K562 (cell line): ENCODE measurements at regions of chr15 and their contacts with region 1.

Region 1: DNA sequence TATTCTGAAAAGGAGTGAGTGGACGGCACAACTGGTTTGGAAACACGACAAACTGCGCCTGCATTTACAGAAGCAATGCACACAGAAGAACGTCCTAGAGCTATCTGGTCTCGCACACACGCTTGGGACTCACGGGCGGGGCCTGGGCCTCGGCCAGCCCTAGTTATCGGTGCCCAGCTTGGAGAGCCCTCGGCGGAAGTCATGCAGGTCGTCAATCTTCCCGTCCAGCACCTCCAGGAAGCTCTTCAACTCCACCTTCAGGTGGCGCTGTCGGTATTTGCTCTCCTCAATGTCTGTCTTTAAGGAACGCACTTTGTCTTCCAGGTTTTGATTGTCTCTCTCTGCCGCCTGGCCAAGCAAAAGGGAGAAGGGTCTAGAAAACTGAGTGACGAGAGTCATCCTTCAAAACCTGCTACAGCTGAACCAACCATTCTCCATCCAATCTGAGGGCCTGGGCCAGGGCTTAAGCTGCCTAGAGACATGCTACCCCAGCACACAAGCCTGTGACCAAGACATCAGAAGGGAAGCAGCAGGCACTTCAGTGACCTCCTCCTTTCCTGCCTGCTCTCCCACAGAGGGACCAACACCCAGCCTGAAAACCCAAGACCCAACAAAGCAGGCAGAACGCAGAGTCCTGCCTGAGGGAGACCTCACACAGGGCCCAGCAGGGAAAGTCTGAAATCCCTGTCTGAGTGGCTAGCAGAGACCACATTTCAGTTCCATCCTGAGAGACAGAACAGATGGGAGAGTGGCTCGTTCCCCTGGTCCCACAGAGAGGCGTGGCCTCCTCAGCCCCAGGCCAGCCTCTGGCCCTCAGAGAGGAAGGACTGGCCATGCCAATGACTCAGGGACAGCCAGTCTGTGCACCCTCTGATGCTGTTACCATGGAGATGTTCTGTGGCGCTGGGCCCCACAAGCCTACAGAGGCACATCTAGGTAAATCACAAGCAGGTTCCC is 40.4 kb downstream of the WHAMM start:
- DNase-seq: peak; percentile 90 to 99 (median 91)
- ATAC-seq: peak; percentile 97
- H3K4me3 ChIP-seq: no peak overlapping the region
- H3K27ac ChIP-seq: peak overlapping the region; percentile 72
- H3K4me1 ChIP-seq: peaks cover 35 to 55% of the 10 kb centered on the region in 2 experiments; a peak in 4 of 5 replicates
- H3K27me3 ChIP-seq: no peaks in the 10 kb centered on the region
- CTCF ChIP-seq: peak; percentile 95 to 97 (median 96)
- EP300 ChIP-seq: peak; percentile 89
- POLR2A ChIP-seq: peak; percentile 59
- RAD21 ChIP-seq: peak; percentile 91 to 93

Region 2: GRCh38 chr15:82809404-82810060 is 40.3 kb before region 1 on chr15 and contains the start of gene WHAMM:
- CTCF ChIA-PET with region 1: no interaction called
- POLR2A ChIA-PET with region 1: interaction called, 3 read pairs
- in situ Hi-C with region 1: no loop called
- intact Hi-C with region 1: loop called (anchors 5 kb)
- DNase-seq: peak; percentile 98 to 99 (median 98)
- ATAC-seq: peak; percentile 96
- H3K4me3 ChIP-seq: peak within 1 kb of the TSS; percentile 94
- H3K27ac ChIP-seq: peak within 1 kb of the TSS; percentile 93
- H3K4me1 ChIP-seq: peaks cover 12 to 21% of the 10 kb centered on the region in 2 experiments; a peak in 4 of 5 replicates
- H3K27me3 ChIP-seq: no peaks in the 10 kb centered on the region
- CTCF ChIP-seq: peak in 2 of 3 experiments; percentile 19 to 44; a peak in 2 of 6 replicates
- EP300 ChIP-seq: no peak
- POLR2A ChIP-seq: peak; percentile 91
- RAD21 ChIP-seq: no peak
- polyA plus RNA-seq, gene WHAMM: 2.0 to 2.3 TPM

Region 3: DNA sequence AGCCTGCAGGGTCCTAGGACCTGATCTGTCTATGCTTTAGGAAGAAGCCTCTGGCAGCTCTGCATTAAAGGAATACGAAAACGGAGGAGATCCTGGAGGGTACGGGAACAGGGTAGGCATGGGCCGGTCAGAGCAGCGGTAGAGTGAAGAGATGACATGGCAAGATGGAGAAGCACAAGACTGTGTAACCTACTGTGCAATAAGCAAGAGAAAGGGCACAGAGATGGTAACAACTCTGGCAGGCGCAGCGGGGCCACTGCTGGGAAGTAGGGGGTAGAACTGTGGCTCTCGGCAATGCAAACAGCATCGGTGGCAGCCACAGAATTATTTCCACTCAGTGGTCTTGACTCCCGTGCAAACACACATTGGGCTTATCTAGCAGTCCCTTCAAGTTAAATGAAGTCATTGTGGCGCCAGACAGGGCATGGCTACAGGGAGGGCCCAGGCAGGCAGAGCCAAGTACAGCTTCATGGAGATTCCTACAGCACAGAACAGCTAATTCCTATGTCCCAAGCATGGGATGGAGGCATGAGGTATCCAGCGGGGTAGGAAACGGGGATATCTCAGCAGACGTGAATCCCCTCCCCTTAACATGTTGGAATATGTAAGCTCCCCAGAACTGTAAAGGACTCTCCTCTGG is 11.6 kb before region 1 on chr15:
- CTCF ChIA-PET with region 1: no interaction called
- POLR2A ChIA-PET with region 1: interaction called, 14 read pairs
- in situ Hi-C with region 1: no loop called
- intact Hi-C with region 1: no loop called
- DNase-seq: peak in 1 of 4 experiments; percentile 2
- ATAC-seq: peak; percentile 48
- H3K4me3 ChIP-seq: no peak overlapping the region
- H3K27ac ChIP-seq: no peak overlapping the region
- H3K4me1 ChIP-seq: no peaks in the 10 kb centered on the region
- H3K27me3 ChIP-seq: no peaks in the 10 kb centered on the region
- CTCF ChIP-seq: no peak
- EP300 ChIP-seq: no peak
- POLR2A ChIP-seq: no peak
- RAD21 ChIP-seq: no peak

Region 4: DNA sequence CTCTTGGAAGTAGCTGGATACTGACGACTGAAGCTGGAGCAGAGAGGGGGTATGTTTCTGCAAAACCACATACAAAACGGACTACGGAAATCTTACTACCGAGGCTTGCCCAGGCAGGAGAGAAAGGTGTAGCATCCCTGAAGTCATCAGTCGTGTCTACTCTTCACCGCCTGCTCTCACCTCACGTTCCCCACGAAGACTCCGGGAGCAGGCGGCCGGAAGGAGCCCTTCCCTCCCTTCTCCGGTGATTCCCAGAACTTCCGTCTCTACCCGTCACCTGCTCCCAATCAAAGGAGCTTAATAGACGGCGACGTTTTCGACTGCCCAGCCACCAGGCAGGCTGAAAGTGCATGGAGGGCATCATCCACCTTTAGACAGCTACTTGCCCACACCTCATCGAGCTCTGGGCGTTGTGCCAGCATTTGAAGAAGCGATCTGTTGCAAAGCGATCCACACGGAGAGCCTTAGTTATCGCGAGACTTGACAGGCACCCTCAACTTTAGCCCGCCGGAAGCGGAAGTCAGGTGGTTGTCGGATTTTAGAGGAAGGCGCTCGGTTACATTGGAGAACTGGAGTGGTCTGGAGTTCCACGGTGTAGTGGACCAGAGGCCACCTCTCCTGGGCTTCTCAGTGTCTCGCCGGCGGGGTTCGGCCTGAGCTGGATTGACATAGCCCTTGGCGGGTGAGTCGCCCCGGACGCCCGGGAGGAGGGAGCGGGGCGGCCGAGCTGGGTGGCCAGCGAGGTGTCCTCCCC is 136.0 kb after region 1 on chr15 and contains the start of gene RAMAC:
- CTCF ChIA-PET with region 1: no interaction called
- POLR2A ChIA-PET with region 1: no interaction called
- in situ Hi-C with region 1: loop called (anchors 10 kb)
- intact Hi-C with region 1: loop called (anchors 1 kb)
- DNase-seq: peak; percentile 87 to 96 (median 89)
- ATAC-seq: peak; percentile 98
- H3K4me3 ChIP-seq: peak within 1 kb of the TSS; percentile 77
- H3K27ac ChIP-seq: peak within 1 kb of the TSS; percentile 75
- H3K4me1 ChIP-seq: peaks cover 0 to 5% of the 10 kb centered on the region in 2 experiments; a peak in 3 of 5 replicates
- H3K27me3 ChIP-seq: no peaks in the 10 kb centered on the region
- CTCF ChIP-seq: no peak
- EP300 ChIP-seq: no peak
- POLR2A ChIP-seq: peak; percentile 88
- RAD21 ChIP-seq: no peak
- polyA plus RNA-seq, gene RAMAC: 100 to 108 TPM

Region 5: GRCh38 chr15:82999905-83000671 is 150.3 kb after region 1 on chr15:
- CTCF ChIA-PET with region 1: interaction called, 6 read pairs
- POLR2A ChIA-PET with region 1: interaction called, 4 read pairs
- in situ Hi-C with region 1: no loop called
- intact Hi-C with region 1: loop called (anchors 1 kb)
- DNase-seq: peak; percentile 27 to 67 (median 42)
- ATAC-seq: peak; percentile 92
- H3K4me3 ChIP-seq: no peak overlapping the region
- H3K27ac ChIP-seq: peak overlapping the region; percentile 2; the same call in 1 of the 3 replicates
- H3K4me1 ChIP-seq: peaks cover 0 to 5% of the 10 kb centered on the region in 2 experiments; a peak in 2 of 5 replicates
- H3K27me3 ChIP-seq: no peaks in the 10 kb centered on the region
- CTCF ChIP-seq: peak; percentile 56 to 83 (median 65)
- EP300 ChIP-seq: no peak
- POLR2A ChIP-seq: no peak
- RAD21 ChIP-seq: peak; percentile 91 to 96

Region 6: GRCh38 chr15:83207622-83208411 is 358.0 kb after region 1 on chr15 and contains the start of gene HDGFL3:
- CTCF ChIA-PET with region 1: no interaction called
- POLR2A ChIA-PET with region 1: no interaction called
- in situ Hi-C with region 1: no loop called
- intact Hi-C with region 1: loop called (anchors 5 kb)
- DNase-seq: peak in 3 of 4 experiments; percentile 60 to 62 (median 62)
- ATAC-seq: peak; percentile 65
- H3K4me3 ChIP-seq: peak within 1 kb of the TSS; percentile 69
- H3K27ac ChIP-seq: peak within 1 kb of the TSS; percentile 68
- H3K4me1 ChIP-seq: peaks cover 14 to 18% of the 10 kb centered on the region in 2 experiments
- H3K27me3 ChIP-seq: peaks cover 2 to 6% of the 10 kb centered on the region in 2 experiments; a peak in 3 of 5 replicates
- CTCF ChIP-seq: peak in 2 of 3 experiments; percentile 40 to 41; a peak in 3 of 6 replicates
- EP300 ChIP-seq: no peak
- POLR2A ChIP-seq: 0 out of 2 replicates have a peak, but pooled peaks have one; percentile 31
- RAD21 ChIP-seq: peak; percentile 51 to 60
- polyA plus RNA-seq, gene HDGFL3: 6.7 to 7.5 TPM